A673 (cell line): ENCODE measurements at regions of chr7 and their contacts with region 1.

Region 1: GRCh38 chr7:82389861-82390260 is 53.7 kb downstream of the CACNA2D1 start:
- DNase-seq: peak; percentile 66
- H3K4me3 ChIP-seq: no peak overlapping the region
- H3K27ac ChIP-seq: peak overlapping the region; percentile 95
- H3K4me1 ChIP-seq: peaks cover 89% of the 10 kb centered on the region
- H3K27me3 ChIP-seq: no peaks in the 10 kb centered on the region
- CTCF ChIP-seq: no peak

Region 2: GRCh38 chr7:82044497-82045080 is 345.3 kb before region 1 on chr7:
- CTCF ChIA-PET with region 1: no interaction called
- POLR2A ChIA-PET with region 1: interaction called, 7 read pairs
- intact Hi-C with region 1: loop called (anchors 5 kb)
- DNase-seq: peak; percentile 70
- H3K4me3 ChIP-seq: no peak overlapping the region
- H3K27ac ChIP-seq: no peak overlapping the region
- H3K4me1 ChIP-seq: peaks cover 17% of the 10 kb centered on the region
- H3K27me3 ChIP-seq: no peaks in the 10 kb centered on the region
- CTCF ChIP-seq: peak; percentile 76

Region 3: GRCh38 chr7:82164813-82165212 is 225.0 kb before region 1 on chr7:
- CTCF ChIA-PET with region 1: no interaction called
- POLR2A ChIA-PET with region 1: no interaction called
- intact Hi-C with region 1: loop called (anchors 5 kb)
- DNase-seq: peak; percentile 71
- H3K4me3 ChIP-seq: no peak overlapping the region
- H3K27ac ChIP-seq: no peak overlapping the region
- H3K4me1 ChIP-seq: peaks cover 31% of the 10 kb centered on the region
- H3K27me3 ChIP-seq: no peaks in the 10 kb centered on the region
- CTCF ChIP-seq: peak; percentile 62

Region 4: DNA sequence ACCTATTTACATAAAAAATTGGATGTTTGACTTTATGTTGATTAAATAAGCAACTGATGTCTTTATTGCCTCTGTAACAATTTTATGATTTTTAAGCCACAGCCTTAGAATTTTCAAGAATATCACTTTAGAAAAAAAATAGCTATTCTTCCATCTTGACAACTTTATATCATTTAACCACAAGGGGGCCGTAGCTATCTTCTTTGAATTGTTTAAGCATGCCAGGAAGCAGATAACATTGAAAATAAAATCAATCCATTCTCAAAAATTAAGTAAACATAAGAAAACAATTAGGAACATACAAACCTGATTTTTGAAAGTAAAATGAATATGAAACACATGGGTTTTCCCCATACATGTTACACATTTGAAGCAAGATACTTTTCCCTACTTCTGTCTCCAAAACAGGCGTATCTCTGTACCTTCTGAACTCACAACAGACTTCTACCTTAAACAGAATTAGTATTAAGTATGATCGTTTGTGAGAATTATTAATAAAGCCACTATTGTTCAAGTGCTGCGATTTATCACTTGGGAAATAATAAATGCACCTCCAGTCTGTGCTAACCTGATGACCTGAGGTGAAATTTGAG is 155.3 kb before region 1 on chr7:
- CTCF ChIA-PET with region 1: no interaction called
- POLR2A ChIA-PET with region 1: no interaction called
- intact Hi-C with region 1: loop called (anchors 2 kb)
- DNase-seq: peak; percentile 78
- H3K4me3 ChIP-seq: no peak overlapping the region
- H3K27ac ChIP-seq: no peak overlapping the region
- H3K4me1 ChIP-seq: peaks cover 49% of the 10 kb centered on the region
- H3K27me3 ChIP-seq: no peaks in the 10 kb centered on the region
- CTCF ChIP-seq: peak; percentile 80

Region 5: DNA sequence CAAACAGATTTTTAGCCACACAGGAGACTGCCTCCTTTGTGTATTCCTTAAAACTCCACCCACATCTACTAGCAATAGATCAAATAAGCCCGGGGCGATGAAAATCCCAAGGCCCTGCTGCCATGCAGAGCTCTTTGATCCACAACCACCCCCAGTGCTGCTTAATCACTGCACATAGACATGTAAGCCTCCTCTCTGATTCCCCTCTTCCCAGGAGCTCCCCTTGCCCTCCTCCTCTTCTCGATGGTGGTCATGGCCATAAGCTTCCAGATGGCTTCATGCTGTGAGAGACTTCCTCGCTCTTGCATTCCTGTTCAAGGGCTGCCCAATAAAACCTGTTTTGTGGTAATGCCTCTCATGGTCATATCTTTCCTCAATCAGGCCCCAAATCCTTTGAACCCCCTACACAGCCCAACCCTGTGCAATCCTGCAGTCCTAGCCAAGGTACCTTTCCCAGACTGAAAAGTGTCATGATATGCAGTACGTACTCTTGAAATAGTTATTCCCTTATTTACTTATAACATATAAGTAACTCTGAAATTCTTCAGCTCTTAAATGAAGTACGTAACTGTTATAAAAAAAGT is 104.8 kb before region 1 on chr7:
- CTCF ChIA-PET with region 1: no interaction called
- POLR2A ChIA-PET with region 1: no interaction called
- intact Hi-C with region 1: loop called (anchors 5 kb)
- DNase-seq: peak; percentile 63
- H3K4me3 ChIP-seq: no peak overlapping the region
- H3K27ac ChIP-seq: no peak overlapping the region
- H3K4me1 ChIP-seq: peaks cover 43% of the 10 kb centered on the region
- H3K27me3 ChIP-seq: no peaks in the 10 kb centered on the region
- CTCF ChIP-seq: no peak

Region 6: DNA sequence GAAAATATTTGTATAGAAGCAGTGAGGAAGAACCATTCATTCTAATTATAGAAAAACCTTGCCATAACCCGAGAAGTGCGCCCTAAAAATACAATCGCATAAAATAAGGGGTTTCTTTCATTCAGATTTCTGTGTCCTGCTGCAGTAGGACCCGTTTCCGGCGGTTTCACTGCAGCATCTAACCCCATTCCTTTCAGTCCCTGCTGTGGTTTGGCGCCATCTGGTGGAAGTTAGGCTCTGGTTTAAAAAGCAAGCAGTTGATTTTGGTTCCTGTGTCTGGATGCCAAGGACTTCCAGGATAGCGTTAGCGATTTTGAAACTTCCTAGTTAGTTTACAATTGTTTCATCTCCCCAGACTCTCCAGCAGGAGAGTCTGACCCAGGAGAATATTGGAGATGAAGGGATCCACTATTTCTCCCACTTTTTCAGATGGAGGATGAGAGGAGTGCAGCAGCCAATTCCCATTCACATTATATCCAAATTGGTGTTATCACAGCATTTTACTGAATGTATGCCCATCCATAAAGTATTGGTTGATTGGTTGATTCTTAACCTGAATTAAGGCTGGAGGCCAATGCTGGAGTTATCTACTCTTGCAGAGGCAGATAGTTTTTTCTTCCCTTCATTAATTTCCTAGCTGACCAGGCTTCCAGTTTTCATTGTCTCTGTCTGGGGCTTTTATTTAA is 182.5 kb after region 1 on chr7:
- CTCF ChIA-PET with region 1: interaction called, 3 read pairs
- POLR2A ChIA-PET with region 1: interaction called, 3 read pairs
- intact Hi-C with region 1: loop called (anchors 2 kb)
- DNase-seq: peak; percentile 92
- H3K4me3 ChIP-seq: peak overlapping the region; percentile 20
- H3K27ac ChIP-seq: no peak overlapping the region
- H3K4me1 ChIP-seq: peaks cover 5% of the 10 kb centered on the region
- H3K27me3 ChIP-seq: no peaks in the 10 kb centered on the region
- CTCF ChIP-seq: peak; percentile 95

Region 7: GRCh38 chr7:82605247-82605872 is 215.5 kb after region 1 on chr7:
- CTCF ChIA-PET with region 1: no interaction called
- POLR2A ChIA-PET with region 1: no interaction called
- intact Hi-C with region 1: loop called (anchors 2 kb)
- DNase-seq: peak; percentile 74
- H3K4me3 ChIP-seq: no peak overlapping the region
- H3K27ac ChIP-seq: no peak overlapping the region
- H3K4me1 ChIP-seq: peaks cover 4% of the 10 kb centered on the region
- H3K27me3 ChIP-seq: no peaks in the 10 kb centered on the region
- CTCF ChIP-seq: peak; percentile 84

Region 8: GRCh38 chr7:83072576-83073517 is 683.0 kb after region 1 on chr7:
- CTCF ChIA-PET with region 1: no interaction called
- POLR2A ChIA-PET with region 1: no interaction called
- intact Hi-C with region 1: no loop called
- DNase-seq: peak; percentile 7
- H3K4me3 ChIP-seq: no peak overlapping the region
- H3K27ac ChIP-seq: no peak overlapping the region
- H3K4me1 ChIP-seq: no peaks in the 10 kb centered on the region
- H3K27me3 ChIP-seq: no peaks in the 10 kb centered on the region
- CTCF ChIP-seq: peak; percentile 58; the same call in 1 of the 2 replicates